Right ventricle myocardium inferior (tissue), 1 donor: ENCODE measurements at regions of chr1 and their contacts with region 1.

Region 1: DNA sequence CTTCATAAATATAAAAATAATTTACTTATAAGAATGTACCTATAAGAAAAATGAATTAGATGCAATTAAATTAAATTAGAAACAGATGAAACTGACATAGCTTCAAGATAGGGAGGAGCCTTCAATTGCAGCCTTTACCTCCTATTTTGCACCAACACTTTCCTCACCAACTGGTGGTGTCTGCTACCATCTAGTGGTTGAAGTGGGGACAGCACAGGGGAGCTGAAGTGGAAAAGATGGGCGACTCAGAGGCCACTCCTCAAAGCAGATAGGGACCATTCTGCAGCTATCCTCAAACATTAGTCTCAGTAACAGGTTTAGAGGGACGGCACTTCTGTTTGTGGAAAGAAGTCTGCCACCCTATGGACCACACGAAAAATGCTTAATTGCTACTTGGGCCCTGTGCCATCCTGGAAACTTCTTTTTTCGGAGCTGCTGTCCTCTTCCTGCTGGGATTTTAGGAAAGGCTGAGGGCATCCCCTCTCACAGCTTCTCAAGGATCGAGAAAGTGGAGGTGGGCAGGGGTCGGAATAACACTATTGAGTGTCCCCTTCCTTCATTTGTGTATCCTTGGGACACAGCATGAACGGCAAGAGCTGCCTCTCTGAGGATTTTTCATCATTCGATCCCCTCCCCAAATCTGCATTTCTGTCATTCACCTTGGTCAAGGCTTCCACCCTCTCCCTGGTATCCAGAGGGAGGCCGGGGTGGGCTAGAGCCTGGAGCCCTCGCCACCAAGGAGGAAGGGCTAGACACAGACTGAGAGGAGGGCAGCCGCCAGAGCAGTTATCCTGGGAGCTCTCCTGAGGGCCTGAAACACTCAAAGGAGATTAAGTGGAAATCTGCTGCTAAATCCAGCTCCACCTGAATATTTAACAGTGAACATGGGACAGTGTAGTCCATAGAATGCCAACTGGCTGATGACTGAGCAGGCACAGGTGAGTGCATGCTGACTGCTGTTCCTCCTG is 9.6 kb downstream of the PROK1 start:
- DNase-seq: no peak
- ATAC-seq: peak; percentile 75

Region 2: DNA sequence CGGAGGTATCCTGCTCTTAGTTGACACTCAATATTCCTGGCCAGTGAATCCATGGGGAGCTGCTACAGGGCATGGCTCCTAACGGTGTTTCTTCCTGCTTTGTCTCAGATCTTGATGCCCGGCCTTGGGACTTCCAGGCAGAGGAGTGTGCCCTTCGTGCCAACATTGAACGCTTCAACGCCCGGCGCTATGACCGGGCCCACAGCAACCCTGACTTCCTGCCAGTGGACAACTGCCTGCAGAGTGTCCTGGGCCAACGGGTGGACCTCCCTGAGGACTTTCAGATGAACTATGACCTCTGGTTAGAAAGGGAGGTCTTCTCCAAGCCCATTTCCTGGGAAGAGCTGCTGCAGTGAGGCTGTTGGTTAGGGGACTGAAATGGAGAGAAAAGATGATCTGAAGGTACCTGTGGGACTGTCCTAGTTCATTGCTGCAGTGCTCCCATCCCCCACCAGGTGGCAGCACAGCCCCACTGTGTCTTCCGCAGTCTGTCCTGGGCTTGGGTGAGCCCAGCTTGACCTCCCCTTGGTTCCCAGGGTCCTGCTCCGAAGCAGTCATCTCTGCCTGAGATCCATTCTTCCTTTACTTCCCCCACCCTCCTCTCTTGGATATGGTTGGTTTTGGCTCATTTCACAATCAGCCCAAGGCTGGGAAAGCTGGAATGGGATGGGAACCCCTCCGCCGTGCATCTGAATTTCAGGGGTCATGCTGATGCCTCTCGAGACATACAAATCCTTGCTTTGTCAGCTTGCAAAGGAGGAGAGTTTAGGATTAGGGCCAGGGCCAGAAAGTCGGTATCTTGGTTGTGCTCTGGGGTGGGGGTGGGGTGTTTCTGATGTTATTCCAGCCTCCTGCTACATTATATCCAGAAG is 406.7 kb before region 1 on chr1:
- intact Hi-C with region 1: loop called (anchors 10 kb)
- DNase-seq: peak; percentile 83
- ATAC-seq: peak; percentile 71

Region 3: DNA sequence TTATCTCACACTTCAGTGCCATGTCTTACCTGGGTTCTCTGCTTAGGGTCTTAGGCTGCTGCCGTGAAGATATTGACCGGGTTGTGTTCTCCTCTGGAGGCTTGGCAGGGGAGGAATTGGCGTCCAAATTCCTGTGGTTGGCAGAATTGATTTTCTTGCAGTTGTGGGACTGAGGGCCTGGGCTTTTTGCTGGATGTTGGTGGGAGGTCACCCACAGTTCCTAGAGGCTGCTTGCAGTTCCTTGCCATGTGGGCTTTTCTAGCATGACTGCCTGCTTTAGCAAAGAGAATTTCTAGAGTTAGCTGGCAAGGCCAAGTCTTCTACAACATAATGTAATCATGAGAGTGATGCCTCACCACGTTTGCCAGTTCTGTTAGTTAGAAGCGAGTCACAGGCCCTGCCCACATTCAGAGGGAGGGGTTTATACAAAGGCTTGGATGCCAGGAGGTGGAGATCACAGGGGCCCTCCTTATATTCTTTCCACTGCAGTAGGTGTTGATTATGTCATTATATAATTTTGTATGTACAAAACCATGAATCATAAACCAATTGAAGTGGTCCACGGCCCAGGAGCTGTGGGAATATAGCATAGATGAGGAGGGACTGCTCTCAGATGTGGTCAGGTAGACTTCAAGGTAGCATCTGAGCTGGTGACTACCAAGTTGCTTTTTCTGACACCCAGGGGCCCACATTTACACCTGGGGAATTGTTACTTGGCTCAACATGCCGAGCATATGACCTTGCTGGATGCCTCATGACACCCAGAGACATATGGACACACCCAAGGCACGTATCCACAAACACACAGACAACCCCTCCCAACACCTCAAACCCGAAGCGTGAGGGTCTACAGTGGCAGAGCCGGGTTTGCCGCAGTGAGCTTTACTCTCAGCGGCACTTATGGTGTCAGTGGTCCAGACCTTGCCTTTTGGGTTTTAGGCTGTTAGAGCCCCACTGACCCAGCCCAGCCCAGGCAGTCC is 341.6 kb before region 1 on chr1:
- intact Hi-C with region 1: no loop called
- DNase-seq: peak; percentile 34
- ATAC-seq: no peak

Region 4: DNA sequence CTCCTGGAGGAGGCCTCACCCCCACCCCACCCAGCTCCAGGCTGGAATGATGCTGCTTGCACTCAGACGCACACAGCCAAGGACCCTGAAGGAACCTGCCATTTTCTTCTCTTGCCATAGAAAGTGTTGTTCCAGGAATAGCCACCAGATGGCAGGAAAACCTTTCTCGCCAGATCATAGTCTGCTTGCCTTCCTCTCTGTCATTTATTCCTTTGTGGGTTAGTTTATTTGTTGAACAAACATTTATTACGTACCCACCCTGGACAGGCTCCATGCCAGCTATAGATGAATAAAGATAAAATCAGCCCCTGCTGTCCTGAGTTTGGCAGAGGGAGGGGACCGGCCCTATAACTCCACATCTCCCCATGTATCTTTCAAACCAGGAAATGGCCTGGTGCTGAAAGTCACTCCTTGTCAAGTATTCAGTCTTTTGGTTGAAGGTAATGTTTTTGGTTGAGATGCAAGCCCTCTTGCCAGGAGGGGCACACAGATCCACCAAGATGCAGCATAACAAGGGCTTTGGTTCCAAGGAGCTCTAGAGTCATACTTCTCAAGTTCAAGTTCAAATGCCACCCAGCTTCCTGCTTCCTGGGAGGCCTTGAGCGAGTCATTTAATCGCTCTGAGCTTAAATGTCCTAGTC is 257.4 kb before region 1 on chr1:
- intact Hi-C with region 1: loop called (anchors 1 kb)
- DNase-seq: no peak
- ATAC-seq: no peak

Region 5: DNA sequence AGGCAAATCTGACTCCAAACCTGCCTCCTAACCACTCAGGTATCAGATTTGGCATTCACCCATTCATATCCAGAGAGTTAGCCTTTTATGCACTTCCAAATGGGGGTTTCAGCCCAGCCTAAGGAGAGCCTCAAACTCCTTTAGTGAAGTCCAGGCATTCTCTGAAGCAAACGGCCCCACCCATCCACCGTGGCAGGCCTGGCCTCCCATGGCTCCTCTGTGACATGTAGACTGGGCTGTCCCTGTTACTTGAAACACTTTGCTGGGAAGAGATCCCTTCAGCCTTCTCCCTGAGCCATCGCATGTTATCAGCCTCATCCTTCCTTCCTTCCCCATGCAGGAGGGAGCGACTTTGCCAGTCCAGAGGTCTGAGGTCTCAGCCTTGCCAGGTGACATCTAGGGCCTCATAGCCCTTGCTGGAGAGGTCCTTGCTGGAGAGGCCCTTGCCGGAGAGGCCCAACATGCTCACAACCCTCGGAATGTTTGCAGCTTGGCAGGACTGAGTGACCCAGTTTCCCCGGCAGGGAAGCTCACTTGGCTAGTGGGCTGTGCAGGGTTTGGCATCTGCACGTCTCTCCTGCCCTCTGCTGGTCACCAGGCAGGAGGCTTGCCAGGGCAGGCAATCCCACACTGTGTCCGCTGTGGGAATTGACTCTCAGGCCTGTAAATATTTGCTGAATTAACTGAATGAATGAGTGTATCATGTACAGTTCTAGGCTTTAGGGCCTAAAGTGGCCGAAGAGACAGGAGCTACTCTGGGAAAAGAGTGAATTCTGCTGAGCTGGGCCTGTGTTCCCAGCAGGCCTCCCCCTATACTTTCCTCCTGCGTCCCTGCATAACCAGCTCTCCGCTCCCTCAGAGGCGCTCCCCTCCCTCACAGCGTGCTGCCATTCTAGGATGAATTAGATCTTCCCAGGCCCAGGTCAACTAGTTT is 148.1 kb before region 1 on chr1:
- intact Hi-C with region 1: loop called (anchors 5 kb)
- DNase-seq: peak; percentile 88
- ATAC-seq: peak; percentile 97

Region 6: DNA sequence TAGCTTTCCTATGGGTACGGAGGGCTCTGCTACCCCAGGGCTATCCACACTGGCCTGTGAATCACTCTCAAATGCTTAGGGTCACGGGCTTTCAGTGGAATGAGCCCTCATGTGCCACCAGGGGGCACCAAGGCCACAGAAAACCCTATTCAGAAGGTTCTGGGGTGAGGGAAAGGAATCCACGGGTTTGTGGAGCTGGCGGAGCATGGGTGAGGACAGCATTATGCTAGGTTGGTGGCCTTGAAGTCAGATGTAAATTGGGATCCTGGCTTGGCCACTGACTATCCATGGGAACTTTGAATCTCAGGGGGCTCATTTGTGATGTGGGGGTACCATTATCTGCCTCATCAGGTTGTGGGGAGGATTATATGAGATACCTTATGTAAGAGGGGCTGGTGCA is 48.0 kb before region 1 on chr1:
- intact Hi-C with region 1: loop called (anchors 1 kb)
- DNase-seq: peak; percentile 79
- ATAC-seq: peak; percentile 75